ENCODE measurements at regions of chr15 and their contacts with region 1.

Region 1: GRCh38 chr15:74460871-74461846 is at the start of gene UBL7:
- DNase-seq: peak; percentile 87 to 98
- H3K4me3 ChIP-seq: peak within 1 kb of the TSS; percentile 79 to 97 (median 85)
- H3K27ac ChIP-seq: peak within 1 kb of the TSS; percentile 58
- H3K4me1 ChIP-seq: no peaks in the 10 kb centered on the region; a peak in 1 of 7 replicates
- H3K27me3 ChIP-seq: no peaks in the 10 kb centered on the region
- CTCF ChIP-seq: peak in 2 of 3 experiments; percentile 19 to 21; a peak in 3 of 4 replicates
- EP300 ChIP-seq: no peak
- POLR2A ChIP-seq: peak; percentile 91 to 98
- RAD21 ChIP-seq: peak; percentile 19 to 33; a peak in 3 of 4 replicates
- total RNA-seq, gene UBL7: 71.5 and 76.7 TPM in 2 replicates

Region 2: DNA sequence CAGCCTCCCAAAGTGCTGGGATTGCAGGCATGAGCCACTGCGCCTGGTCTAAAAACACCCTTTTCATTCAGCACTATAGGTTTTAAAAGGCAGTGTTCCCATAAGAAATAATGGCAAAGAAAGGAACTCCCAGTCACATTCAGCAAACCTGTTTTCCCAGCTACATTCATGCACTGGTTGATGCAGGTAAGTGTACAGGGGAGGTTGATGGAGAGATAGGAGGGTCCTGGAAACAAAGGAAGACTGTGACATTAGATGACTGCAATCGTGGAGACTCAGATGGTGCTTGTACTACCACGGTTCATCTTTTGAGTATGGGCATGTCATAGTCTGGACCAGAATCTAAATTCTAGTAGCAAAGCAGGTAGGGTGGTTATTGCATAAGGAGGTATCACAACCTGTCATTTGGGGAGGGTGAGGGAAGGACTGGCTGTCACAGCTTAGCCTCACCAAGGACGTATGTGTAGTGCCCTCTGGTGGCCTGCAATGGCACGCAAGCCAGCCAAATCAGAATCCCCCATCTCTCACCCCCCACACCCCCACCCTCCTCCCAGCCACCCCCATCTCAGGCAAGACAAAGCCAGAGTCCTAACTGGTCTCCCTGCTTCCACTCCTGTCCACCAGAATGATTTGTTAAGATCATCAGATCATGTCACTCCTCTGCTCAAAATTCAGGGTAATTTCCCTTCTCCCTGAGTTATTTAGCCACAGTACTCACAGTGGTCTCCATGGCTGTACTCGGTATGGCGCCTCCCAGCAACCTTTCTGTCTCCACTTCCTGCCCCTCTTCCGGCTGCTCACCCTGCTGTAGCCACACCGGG is 28.6 kb after region 1 on chr15:
- CTCF ChIA-PET with region 1: interaction called, 13 read pairs
- POLR2A ChIA-PET with region 1: interaction called, 5 read pairs
- DNase-seq: peak; percentile 41 to 86
- H3K4me3 ChIP-seq: peak overlapping the region in 1 of 4 experiments; percentile 26; a peak in 1 of 8 replicates
- H3K27ac ChIP-seq: no peak overlapping the region
- H3K4me1 ChIP-seq: peaks cover 0 to 4% (median 4%) of the 10 kb centered on the region in 4 experiments; a peak in 5 of 7 replicates
- H3K27me3 ChIP-seq: no peaks in the 10 kb centered on the region
- CTCF ChIP-seq: peak; percentile 72 to 87 (median 76)
- EP300 ChIP-seq: no peak
- POLR2A ChIP-seq: peak in 1 of 2 experiments; percentile 39; a peak in 1 of 3 replicates
- RAD21 ChIP-seq: peak; percentile 68 to 72

Region 3: DNA sequence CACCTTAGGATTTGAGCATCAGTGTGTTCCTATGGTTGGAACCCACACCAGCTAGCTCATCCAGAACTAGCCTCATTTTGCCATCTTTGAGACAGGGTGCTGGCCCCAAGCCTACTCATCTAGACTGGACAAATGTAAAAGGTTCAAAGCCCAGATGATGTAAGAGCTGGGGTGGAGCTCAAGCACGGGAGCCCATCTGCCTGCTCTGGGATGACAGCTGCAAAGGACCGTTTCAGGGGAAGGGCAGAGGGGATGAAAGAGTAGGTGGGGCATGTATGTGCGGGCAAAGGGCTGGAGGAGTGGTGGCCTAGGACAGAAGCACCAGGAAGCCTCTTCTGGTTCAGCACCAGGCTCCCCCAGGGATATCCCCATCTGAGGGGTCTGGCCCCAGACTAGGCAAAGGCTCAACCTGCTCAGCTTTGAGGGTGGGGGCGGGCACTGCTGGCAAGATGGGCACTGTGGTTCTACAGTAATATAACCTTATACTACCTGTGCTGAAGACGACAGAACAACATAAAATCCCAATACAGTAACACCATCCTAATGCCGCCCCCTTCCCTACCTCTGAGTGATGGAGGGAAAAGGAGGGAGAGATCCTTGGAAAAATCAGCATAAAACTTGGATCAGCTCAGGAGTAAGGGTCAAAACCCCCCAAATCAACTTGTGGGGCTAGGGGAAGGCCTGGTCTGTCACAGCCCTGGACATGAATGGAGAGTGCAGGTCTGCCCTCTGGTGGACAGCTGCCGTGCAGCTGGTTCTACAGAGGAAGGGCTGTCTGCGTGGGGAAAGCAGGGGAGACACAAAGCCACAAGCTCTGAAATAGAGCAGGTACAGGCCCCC is 170.5 kb after region 1 on chr15:
- CTCF ChIA-PET with region 1: no interaction called
- POLR2A ChIA-PET with region 1: no interaction called
- DNase-seq: peak in 1 of 2 experiments; percentile 87
- H3K4me3 ChIP-seq: no peak overlapping the region
- H3K27ac ChIP-seq: no peak overlapping the region
- H3K4me1 ChIP-seq: no peaks in the 10 kb centered on the region
- H3K27me3 ChIP-seq: no peaks in the 10 kb centered on the region
- CTCF ChIP-seq: peak; percentile 81 to 98 (median 96)
- EP300 ChIP-seq: no peak
- POLR2A ChIP-seq: no peak
- RAD21 ChIP-seq: peak; percentile 56 to 62

Measured in H1 (cell line).